SK-N-SH (cell line): ENCODE measurements at regions of chr13 and their contacts with region 1.

Region 1: GRCh38 chr13:81171065-81171647 is 830.2 kb upstream of the SPRY2 start:
- DNase-seq: peak; percentile 12
- H3K4me3 ChIP-seq: no peak overlapping the region; a peak in 1 of 4 replicates
- H3K27ac ChIP-seq: no peak overlapping the region
- H3K4me1 ChIP-seq: no peaks in the 10 kb centered on the region
- H3K27me3 ChIP-seq: no peaks in the 10 kb centered on the region
- CTCF ChIP-seq: peak; percentile 81
- EP300 ChIP-seq: no peak
- RAD21 ChIP-seq: peak; percentile 71

Region 2: GRCh38 chr13:80945328-80945727 is 225.8 kb before region 1 on chr13:
- CTCF ChIA-PET with region 1: no interaction called
- POLR2A ChIA-PET with region 1: no interaction called
- DNase-seq: peak; percentile 12
- H3K4me3 ChIP-seq: no peak overlapping the region
- H3K27ac ChIP-seq: peak overlapping the region in 1 of 2 experiments; percentile 60; a peak in 2 of 4 replicates
- H3K4me1 ChIP-seq: peaks cover 0 to 3% of the 10 kb centered on the region in 2 experiments; a peak in 2 of 4 replicates
- H3K27me3 ChIP-seq: no peaks in the 10 kb centered on the region
- CTCF ChIP-seq: no peak
- EP300 ChIP-seq: no peak
- RAD21 ChIP-seq: no peak

Region 3: DNA sequence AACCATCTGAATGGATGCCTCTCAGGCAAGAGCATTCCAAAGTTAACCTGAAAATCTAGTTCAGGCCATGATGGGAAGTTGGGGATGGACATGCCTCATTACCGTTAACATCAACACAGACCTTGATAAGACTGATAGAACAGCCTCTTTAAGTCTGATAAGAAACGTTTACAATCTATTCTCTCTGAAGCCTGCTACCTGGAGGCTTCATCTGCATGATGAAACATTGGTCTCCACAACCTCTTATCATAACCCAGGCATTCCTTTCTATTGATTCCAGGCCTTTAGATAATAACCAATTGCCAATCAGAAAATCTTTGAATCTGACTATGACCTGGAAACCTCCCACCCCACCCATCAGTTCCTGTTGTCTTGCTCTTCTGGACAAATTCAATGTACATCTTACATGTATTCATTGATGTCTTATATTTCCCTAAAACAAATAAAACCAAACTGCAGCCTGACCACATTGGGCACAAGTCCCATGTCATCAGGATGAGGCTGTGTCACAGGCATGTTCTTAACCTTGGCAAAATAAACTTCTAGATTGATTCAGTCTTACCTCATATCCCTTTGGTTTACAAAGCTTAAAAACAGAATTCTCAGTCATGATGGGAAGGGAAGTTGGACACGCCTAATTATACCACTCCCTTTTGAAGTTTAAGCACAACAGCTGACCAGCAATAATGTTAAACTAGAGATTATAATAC is 13.6 kb after region 1 on chr13:
- CTCF ChIA-PET with region 1: interaction called, 18 read pairs
- POLR2A ChIA-PET with region 1: no interaction called
- DNase-seq: no peak
- H3K4me3 ChIP-seq: no peak overlapping the region
- H3K27ac ChIP-seq: no peak overlapping the region
- H3K4me1 ChIP-seq: no peaks in the 10 kb centered on the region
- H3K27me3 ChIP-seq: no peaks in the 10 kb centered on the region
- CTCF ChIP-seq: no peak
- EP300 ChIP-seq: no peak
- RAD21 ChIP-seq: no peak

Region 4: GRCh38 chr13:81480634-81481033 is 309.5 kb after region 1 on chr13:
- CTCF ChIA-PET with region 1: interaction called, 10 read pairs
- POLR2A ChIA-PET with region 1: no interaction called
- DNase-seq: no peak
- H3K4me3 ChIP-seq: no peak overlapping the region
- H3K27ac ChIP-seq: no peak overlapping the region
- H3K4me1 ChIP-seq: no peaks in the 10 kb centered on the region
- H3K27me3 ChIP-seq: no peaks in the 10 kb centered on the region
- CTCF ChIP-seq: no peak; the same call in 1 of the 2 replicates
- EP300 ChIP-seq: no peak
- RAD21 ChIP-seq: 0 out of 2 replicates have a peak, but pooled peaks have one; percentile 18